Mammary epithelial cell (primary cell): ENCODE measurements at regions of chr12 and their contacts with region 1.

Region 1: DNA sequence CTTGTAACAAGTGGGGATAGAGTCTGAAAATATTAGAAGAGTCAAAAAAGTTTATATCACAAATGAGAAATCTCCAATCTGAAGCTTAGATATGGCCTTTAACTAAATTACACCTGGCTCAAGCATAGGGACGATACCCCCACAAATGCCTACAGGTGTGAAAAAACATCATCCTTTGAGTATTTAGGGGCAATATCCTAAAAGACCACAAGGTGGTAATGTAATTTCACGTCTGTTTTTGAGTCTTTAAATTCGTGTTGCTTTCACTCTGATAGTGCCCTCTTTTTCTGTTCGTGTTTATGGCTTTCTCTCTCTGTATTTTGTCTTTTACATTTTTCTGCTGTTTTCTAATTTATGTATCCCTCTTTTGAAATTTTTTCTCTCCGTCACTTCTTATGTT is 84.3 kb downstream of the ETNK1 start:
- DNase-seq: peak; percentile 24
- H3K4me3 ChIP-seq: no peak overlapping the region
- H3K27ac ChIP-seq: no peak overlapping the region
- H3K4me1 ChIP-seq: no peaks in the 10 kb centered on the region
- H3K27me3 ChIP-seq: no peaks in the 10 kb centered on the region
- CTCF ChIP-seq: peak; percentile 40 to 42

Region 2: DNA sequence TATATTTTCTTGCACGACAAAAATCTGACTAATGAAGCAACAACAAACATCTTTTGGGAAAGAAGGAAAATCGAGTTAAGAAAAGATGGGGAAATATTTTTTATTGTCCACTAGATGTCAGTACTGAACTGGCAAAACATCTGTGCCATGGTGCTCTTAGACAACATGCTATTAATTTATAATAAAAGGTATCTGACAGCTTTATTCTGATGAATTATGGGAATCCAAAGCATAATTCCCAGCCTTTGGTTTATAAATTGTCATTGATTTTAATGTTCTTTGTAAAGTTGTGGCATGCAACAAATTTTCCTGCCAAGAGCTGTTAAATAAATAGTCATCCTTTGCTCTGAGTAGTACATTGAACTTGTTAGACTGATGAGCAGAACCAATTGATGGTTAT is 146.9 kb after region 1 on chr12:
- CTCF ChIA-PET with region 1: no interaction called
- dilution Hi-C with region 1: no loop called
- in situ Hi-C with region 1: no loop called
- intact Hi-C with region 1: loop called (anchors 10 kb)
- DNase-seq: peak; percentile 13
- H3K4me3 ChIP-seq: no peak overlapping the region
- H3K27ac ChIP-seq: no peak overlapping the region
- H3K4me1 ChIP-seq: no peaks in the 10 kb centered on the region
- H3K27me3 ChIP-seq: no peaks in the 10 kb centered on the region
- CTCF ChIP-seq: peak; percentile 42 to 62

Region 3: GRCh38 chr12:22981711-22982110 is 272.4 kb after region 1 on chr12:
- CTCF ChIA-PET with region 1: no interaction called
- dilution Hi-C with region 1: no loop called
- in situ Hi-C with region 1: no loop called
- intact Hi-C with region 1: loop called (anchors 1 kb)
- DNase-seq: peak; percentile 15
- H3K4me3 ChIP-seq: no peak overlapping the region
- H3K27ac ChIP-seq: no peak overlapping the region
- H3K4me1 ChIP-seq: peaks cover 22% of the 10 kb centered on the region
- H3K27me3 ChIP-seq: no peaks in the 10 kb centered on the region
- CTCF ChIP-seq: peak; percentile 29 to 47

Region 4: DNA sequence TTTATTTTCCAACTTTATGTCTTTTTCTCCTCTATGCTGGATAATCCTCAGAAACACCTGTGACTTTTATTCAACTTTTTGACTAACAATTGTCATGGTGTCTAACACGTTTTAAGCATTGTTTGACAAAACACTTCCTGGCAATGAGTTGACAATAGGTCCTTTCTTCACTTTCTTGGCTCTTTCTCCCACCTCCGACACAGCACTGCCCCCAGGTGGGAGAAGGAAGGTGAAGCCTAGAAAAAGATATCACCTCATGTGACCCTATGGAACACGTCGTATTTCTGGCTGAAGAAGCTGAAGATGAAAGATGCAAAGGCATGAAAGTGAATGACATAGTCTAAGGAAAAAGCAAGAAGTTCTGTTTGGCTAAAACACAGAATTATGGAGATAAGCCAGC is 345.7 kb after region 1 on chr12:
- CTCF ChIA-PET with region 1: no interaction called
- dilution Hi-C with region 1: no loop called
- in situ Hi-C with region 1: no loop called
- intact Hi-C with region 1: loop called (anchors 1 kb)
- DNase-seq: peak; percentile 54
- H3K4me3 ChIP-seq: no peak overlapping the region
- H3K27ac ChIP-seq: no peak overlapping the region
- H3K4me1 ChIP-seq: no peaks in the 10 kb centered on the region
- H3K27me3 ChIP-seq: no peaks in the 10 kb centered on the region
- CTCF ChIP-seq: peak; percentile 75

Region 5: GRCh38 chr12:23186950-23187349 is 477.7 kb after region 1 on chr12:
- CTCF ChIA-PET with region 1: interaction called, 13 read pairs
- dilution Hi-C with region 1: no loop called
- in situ Hi-C with region 1: no loop called
- intact Hi-C with region 1: no loop called
- DNase-seq: no peak
- H3K4me3 ChIP-seq: no peak overlapping the region
- H3K27ac ChIP-seq: no peak overlapping the region
- H3K4me1 ChIP-seq: no peaks in the 10 kb centered on the region
- H3K27me3 ChIP-seq: peaks cover 2% of the 10 kb centered on the region
- CTCF ChIP-seq: no peak

Region 6: DNA sequence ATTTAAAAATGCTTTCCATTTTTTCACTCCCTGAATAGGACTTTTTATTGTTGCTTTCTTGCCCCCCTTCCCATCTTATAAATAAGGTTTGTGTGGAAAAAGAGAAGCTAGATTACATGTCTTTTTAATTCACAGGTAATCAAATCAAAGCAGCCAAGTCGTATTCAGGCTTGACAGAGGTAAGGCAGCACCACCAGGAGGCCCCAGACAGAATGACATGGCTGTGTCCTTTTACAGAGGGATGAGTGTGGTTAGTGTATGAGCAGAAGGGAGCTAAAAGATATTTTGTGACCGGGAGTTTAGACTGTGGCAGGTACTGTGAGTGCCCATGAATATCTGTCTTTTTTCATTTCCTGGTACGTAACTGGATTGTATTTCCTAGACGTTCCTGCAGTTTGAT is 511.8 kb after region 1 on chr12:
- CTCF ChIA-PET with region 1: no interaction called
- dilution Hi-C with region 1: no loop called
- in situ Hi-C with region 1: no loop called
- intact Hi-C with region 1: loop called (anchors 10 kb)
- DNase-seq: peak; percentile 5
- H3K4me3 ChIP-seq: no peak overlapping the region
- H3K27ac ChIP-seq: no peak overlapping the region
- H3K4me1 ChIP-seq: no peaks in the 10 kb centered on the region
- H3K27me3 ChIP-seq: no peaks in the 10 kb centered on the region
- CTCF ChIP-seq: peak; percentile 30 to 62